Right ventricle myocardium inferior (tissue), 1 donor: ENCODE measurements at regions of chr10 and their contacts with region 1.

Region 1: GRCh38 chr10:129023082-129023481 is 444.0 kb upstream of the MGMT start:
- DNase-seq: peak; percentile 90
- ATAC-seq: peak; percentile 92

Region 2: DNA sequence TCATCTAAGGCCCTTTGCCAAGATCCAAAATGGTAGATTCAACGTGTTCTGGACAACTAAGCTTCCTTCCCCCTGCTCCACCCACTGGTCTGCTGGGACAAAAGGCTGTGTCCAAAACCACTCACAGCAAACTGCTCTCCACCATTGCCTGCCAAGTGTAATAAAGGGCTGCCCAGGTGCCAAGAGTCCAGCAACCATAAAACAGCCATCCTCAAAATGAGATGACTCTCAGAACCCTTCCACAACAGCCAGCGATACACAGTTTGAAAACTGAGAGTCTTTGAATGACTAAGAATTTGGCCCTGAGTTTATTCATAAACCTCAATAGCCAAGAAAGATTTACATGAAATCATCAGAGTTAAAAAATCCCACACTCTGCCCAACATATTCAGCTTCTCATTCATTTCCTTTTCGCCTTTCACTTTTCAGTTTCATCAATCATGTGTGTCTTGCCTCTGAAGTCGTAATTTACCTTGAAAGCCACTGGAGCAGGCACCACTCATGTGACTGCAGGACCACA is 214.1 kb before region 1 on chr10:
- intact Hi-C with region 1: no loop called
- DNase-seq: no peak
- ATAC-seq: peak; percentile 48

Region 3: DNA sequence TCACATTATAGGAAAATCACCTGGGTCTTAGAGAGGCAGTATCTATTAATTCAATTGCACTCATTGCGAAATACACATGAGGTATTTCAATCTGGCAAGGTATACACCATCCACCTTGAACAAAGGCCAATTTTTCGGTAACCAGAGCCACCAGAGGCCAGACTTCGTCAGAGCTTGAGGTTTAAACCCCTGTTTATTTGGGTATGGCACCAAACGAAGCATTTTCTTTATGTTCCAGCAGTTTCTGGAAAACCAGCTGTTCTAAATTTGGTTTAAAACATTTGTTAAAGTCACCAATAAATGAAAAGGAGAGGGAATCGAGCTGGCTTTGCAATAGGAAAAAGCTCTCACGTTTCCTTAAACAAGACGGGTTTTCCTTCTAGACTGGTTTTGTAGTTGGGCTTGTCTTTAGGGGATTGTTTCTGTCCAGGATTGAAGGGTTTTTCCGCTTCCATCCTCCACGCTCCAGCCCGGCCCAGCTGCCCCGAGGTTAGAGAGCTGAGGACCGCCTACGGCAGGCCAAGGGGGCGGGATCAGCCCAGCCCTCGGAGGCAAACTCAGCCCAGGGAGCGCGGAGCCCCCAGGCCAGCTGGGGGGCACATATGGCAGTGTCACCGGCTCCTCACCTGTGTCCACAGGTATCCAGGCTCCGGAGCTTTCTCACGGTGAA is 95.5 kb before region 1 on chr10:
- intact Hi-C with region 1: loop called (anchors 5 kb)
- DNase-seq: peak; percentile 81
- ATAC-seq: peak; percentile 82